AG04449 (cell line): ENCODE measurements at regions of chr5 and their contacts with region 1.

Region 1: DNA sequence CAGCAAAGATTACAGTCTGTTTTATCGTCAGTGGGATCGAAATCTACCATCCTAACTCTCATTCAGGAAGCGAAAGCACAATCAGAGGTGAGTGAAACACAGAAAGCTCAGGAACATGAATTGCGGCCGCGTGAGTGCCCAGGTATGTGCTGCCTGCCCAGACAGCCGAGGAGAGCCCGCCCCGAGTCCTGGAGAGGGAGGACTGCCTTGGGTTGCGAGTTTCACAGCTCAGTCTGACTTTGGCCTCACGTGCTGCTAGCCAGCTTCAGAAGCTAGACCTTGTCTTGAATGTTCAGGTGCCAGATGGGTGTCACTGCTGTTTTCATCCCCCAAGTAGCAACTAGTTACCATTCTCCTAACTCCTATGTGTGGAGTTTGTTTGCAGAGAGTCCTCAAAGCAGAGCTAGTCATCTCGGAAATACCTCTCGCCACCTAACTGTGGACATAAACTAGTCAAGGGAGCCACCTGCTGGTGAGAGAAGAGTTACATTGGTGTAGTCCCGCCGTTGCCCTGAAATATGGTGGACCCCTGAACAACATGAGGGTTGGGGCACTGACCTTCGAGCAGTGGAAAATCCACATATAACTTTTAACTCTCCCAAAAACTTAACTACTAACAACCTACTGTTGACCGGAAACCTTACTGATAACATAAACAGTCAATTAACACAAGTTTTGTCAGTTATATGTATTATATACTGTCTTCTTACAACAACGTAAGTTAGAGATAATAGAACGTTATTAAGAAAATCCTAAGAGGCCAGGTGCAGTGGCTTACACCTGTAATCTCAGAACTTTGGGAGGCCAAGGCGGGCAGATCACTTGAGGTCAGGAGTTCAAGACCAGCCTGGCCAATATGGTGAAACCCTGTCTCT is 80.9 kb downstream of the GOLPH3 start:
- DNase-seq: no peak
- H3K4me3 ChIP-seq: no peak overlapping the region
- CTCF ChIP-seq: peak; percentile 74

Region 2: DNA sequence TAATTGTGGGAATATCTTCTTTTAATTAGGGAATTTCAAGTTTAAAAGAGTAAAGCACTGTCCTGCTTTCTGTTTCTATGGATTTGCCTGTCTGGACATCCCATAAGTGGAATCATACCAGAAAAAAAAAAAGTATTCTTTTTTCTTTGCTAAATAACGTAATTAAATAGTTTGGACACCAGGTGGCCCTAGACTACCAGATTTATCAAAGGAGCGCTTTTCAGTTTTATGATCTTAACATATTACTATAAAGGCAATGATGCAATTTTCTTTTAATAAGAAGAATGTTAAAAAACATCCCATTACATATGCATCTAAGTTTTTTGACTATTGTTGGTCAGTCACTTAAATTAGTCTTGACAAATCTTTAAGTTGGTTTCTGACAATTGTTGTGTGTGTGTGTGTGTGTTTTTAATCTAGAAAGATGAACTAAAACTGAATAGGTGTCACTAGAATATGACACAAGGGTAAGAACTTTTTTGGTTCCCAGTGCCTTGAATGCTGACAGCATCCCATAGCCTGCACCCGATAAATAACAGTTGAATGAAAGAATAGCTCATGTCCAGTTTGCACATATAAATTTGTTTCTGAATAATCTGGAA is 511.6 kb before region 1 on chr5:
- CTCF ChIA-PET with region 1: interaction called, 22 read pairs
- POLR2A ChIA-PET with region 1: no interaction called
- DNase-seq: no peak
- H3K4me3 ChIP-seq: no peak overlapping the region
- CTCF ChIP-seq: no peak

Region 3: DNA sequence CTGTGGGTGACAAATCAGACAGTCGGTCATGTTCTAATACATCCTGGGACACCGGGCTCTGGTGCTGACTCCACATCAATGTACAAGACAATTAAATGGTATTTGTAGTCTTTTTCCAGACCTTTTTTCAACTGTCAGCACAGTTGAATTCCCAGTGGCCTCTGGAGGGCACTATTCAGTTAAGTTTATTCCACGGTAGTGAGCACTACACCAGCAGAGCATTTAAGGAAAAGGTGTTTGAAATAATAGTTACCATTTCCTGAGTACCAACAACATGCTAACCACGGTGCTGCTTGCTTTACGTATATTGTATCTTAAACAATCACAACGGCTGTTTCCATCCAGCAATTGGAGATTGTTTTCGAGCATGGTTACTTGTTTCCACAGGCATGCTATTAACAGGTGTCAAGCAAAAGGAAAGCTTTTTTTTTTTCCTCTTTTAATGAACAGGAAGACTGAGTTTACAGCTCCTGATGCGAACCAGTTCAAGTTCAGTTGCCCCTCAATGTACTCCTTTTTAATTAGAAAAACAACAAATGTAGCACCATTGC is 267.6 kb before region 1 on chr5:
- CTCF ChIA-PET with region 1: interaction called, 70 read pairs
- POLR2A ChIA-PET with region 1: no interaction called
- DNase-seq: peak; percentile 7
- H3K4me3 ChIP-seq: no peak overlapping the region
- CTCF ChIP-seq: peak; percentile 38

Region 4: DNA sequence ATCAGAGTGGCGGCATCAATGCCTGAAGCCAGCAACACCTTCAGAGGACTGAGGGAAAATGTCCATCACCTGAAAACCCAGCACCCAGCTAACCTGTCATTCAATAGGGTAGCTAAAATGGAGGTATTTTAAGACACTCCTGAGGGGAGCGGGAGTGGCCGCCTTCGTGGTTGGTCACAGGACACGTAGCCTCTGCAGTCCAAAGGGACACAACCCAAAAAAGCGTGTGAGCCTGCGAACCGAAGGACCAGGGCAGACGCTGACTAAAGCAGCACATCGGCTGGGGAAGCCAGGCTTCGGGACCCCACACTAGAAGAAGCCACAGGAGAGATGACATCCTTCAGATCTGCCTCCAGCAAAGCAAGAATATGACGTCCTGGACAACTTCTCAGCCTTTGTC is 10.3 kb after region 1 on chr5:
- CTCF ChIA-PET with region 1: interaction called, 22 read pairs
- POLR2A ChIA-PET with region 1: no interaction called
- DNase-seq: no peak
- H3K4me3 ChIP-seq: no peak overlapping the region
- CTCF ChIP-seq: no peak